ENCODE measurements at regions of chr2 and their contacts with region 1.

Region 1: DNA sequence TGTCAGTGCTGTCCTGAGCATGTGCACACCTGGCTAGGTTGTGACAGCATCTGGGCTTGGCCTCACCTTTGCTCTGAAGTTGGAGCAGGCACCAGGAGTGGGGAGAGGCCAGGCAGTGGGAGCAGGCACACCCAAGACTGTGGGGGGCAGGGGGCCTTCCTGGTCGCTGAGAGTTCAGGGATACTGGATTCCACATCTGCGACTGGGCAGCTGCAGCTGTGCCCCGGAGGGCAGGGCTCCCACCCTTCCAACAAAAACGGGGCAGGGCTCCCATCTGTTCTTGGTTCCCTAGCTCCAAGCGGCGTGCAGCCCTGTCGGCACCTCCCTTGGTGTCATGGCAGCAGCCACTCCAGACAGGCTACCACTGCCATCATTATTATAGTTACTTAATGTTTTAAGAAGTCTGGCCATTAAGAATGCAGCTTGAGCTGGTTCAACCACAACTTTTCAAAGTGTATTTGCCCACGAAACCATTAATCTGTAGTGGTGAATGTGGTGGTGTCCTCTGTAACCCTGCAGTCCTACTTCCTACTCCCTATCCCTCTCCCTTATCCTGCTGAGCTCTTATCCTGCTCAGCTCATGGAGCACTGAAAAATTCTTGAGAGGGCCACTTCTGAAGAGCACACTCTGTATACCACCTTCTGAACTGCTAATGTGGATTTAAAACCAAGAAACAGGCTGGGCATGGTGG is 48.0 kb upstream of the RAB1A start:
- DNase-seq: no peak
- CTCF ChIP-seq: no peak

Region 2: DNA sequence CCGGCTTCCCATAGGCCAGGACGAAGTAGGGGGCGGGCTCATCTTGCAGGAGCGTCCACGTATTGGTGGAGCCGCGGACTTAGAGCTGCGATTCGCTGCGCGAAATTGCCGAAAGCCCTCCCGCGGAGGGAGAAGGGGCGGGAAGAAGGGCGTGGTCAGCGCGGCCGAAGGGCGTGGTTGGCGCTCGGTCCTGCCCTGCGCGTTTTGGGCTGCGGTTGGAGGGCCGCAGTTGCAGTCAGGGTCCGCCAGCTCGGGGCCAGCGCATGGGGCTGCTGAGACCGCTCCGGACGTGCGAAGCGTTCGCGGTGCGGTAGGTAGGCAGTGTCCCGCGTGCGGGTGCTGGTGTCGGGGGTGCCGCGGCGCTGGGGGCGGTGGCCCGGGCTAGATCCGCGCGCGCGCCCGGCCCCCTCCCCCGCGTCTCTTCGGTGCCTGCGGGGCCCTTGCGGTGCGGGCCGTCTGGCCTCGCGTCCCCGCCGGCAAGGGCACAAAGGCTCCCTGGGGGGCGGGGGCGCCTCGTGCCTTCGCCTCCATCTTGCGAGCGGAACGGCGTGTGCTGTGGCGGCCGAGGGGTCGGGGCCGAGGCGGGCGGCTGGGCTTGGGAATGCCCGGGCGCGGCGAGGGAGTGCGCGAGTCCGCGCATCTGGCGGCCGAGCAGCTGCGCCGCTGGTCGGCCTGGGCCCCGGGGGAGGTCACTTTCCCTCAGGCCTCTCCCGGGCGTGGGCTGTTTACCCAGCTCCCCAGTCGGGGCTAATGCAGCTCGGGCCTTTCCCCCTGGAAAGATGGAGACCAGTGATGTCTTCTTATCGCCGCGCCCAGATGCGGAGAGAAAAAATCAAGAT is 121.5 kb before region 1 on chr2 and contains the start of gene CEP68:
- in situ Hi-C with region 1: loop called (anchors 10 kb)
- DNase-seq: peak; percentile 98
- CTCF ChIP-seq: no peak

Region 3: DNA sequence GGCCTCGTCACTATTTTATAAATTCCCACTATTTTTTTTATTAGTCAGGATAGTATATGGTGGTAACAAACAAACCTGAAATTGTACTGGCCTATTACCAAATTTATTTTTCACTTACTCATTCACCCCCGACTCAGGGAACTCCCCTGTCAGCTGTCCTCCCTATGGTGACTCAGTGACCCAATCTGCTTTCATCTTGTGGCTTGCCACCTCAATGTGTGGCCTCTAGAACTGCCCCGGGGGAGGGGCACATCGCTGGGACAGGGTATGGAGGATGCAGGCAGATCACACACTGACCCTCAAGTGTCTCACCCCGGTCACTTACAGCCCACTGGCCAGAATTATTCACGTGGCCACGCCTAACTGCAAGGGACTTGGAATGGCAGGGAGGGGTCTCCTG is 121.3 kb after region 1 on chr2:
- in situ Hi-C with region 1: no loop called
- DNase-seq: peak; percentile 52
- CTCF ChIP-seq: no peak

Measured in GM13977 (cell line).